Colonic mucosa (tissue), 4 donors: ENCODE measurements at regions of chr2 and their contacts with region 1.

Region 1: DNA sequence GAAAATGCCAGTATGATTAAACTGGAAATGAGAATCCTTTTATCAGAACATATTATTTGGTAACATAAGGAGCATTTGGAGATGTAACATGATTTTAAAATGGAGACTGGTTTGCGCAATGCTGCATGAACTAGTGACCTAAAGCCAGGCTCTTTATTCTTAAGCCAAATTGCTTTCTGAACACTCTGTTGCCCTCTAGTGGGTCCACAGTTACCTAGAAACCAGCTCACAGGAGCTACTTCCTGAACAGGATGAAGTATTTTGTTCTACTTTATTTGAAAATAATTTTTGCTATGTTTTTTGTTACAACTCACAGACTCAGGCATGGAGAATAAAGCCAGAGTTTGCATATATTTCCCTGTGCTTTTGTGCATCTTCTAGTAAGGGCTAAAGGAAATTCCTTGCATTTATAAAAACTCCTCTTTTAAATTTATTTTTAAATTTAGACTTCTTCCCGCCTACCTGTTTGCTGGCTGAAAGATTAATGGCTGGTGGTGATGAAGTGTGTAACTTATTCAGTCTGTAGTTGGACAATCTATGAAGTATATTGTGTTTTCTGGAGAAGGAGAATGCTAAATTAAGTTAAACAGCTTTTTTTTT is 146.7 kb downstream of the PARD3B start:
- DNase-seq: peak; percentile 58
- H3K4me3 ChIP-seq: no peak overlapping the region
- H3K27ac ChIP-seq: no peak overlapping the region
- H3K4me1 ChIP-seq: no peaks in the 10 kb centered on the region
- H3K27me3 ChIP-seq: no peaks in the 10 kb centered on the region
- CTCF ChIP-seq: peak; percentile 72

Region 2: DNA sequence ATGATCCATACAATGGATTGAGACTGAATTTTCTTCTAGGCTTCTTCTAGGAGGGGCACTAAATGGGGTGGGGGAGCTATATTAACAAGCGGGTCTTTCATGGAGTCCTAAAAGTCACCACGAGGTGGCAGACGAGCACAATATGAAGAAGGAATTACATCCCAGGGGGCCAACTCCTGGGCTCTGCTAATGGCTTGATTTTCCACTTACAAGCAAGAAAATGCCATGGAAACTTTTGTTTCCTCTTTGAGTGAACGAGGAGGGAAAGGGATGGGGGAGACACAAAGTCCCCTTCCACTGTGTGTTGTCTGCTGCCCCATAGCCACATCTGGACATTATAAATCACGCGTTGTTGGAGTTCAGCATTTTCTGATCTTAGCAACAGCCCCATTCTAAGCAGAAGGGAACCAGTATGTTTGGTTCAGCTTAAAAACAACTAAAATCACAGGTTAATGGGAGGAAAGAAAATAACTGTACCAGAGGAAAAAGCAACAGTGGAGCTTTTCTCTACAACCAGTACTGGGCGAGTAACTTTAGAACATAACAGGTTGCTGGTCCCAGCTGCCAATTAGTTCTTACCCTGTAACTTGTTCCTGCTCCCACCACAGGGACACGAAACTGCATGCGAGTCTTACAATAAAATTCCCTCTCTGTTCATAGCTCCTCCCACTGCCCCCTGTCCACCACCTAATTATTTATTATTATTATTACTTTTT is 431.7 kb before region 1 on chr2:
- intact Hi-C with region 1: loop called (anchors 5 kb)
- DNase-seq: peak; percentile 63
- H3K4me3 ChIP-seq: no peak overlapping the region
- H3K27ac ChIP-seq: no peak overlapping the region
- H3K4me1 ChIP-seq: no peaks in the 10 kb centered on the region
- H3K27me3 ChIP-seq: no peaks in the 10 kb centered on the region
- CTCF ChIP-seq: peak; percentile 57

Region 3: DNA sequence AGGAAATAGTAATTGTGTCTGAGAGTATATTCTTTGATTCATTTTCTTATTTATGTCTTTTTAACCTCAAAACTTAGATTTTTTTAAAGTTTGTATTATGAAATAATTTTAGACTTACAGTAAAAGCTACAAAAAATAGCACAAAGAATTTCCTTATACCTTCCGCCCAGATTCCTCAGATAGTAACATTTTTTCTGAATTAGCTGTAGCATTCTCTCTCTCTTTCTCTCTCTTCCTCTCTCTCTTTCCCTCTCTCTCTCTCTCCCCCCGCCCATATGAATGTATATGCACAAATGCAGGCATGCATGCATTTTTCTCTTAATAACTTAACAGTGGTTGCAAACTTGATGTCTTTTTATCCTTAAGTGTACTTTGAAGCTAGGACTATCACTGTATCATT is 629.2 kb after region 1 on chr2:
- intact Hi-C with region 1: no loop called
- DNase-seq: no peak
- H3K4me3 ChIP-seq: no peak overlapping the region
- H3K27ac ChIP-seq: no peak overlapping the region
- H3K4me1 ChIP-seq: no peaks in the 10 kb centered on the region
- H3K27me3 ChIP-seq: no peaks in the 10 kb centered on the region
- CTCF ChIP-seq: no peak